ENCODE measurements at regions of chr1 and their contacts with region 1.

Region 1: GRCh38 chr1:156910309-156910782 is 10.1 kb upstream of the LRRC71 start:
- DNase-seq: peak; percentile 23 to 72 (median 48)
- ATAC-seq: peak; percentile 70
- H3K4me3 ChIP-seq: no peak overlapping the region
- H3K4me3 Mint-ChIP-seq: peak overlapping the region in 1 of 10 donors; percentile 36
- H3K27ac ChIP-seq: no peak overlapping the region
- H3K27ac Mint-ChIP-seq: peak overlapping the region in 1 of 9 donors; percentile 48
- H3K4me1 ChIP-seq: no peaks in the 10 kb centered on the region
- H3K4me1 Mint-ChIP-seq: peaks cover 0 to 1% (median 0%) of the 10 kb centered on the region in 7 donors
- H3K27me3 ChIP-seq: no peaks in the 10 kb centered on the region
- H3K27me3 Mint-ChIP-seq: peaks cover 5 to 18% (median 11%) of the 10 kb centered on the region in 5 donors

Region 2: GRCh38 chr1:156641761-156642264 is 268.5 kb before region 1 on chr1 and contains the start of gene BCAN:
- CTCF ChIA-PET with region 1: no interaction called
- POLR2A ChIA-PET with region 1: no interaction called
- intact Hi-C with region 1: no loop called
- DNase-seq: no peak
- ATAC-seq: peak; percentile 31
- H3K4me3 ChIP-seq: no peak within 1 kb of the TSS
- H3K4me3 Mint-ChIP-seq: peak within 1 kb of the TSS; percentile 63 to 82 (median 74)
- H3K27ac ChIP-seq: no peak within 1 kb of the TSS
- H3K27ac Mint-ChIP-seq: no peak within 1 kb of the TSS
- H3K4me1 ChIP-seq: peaks cover 0 to 26% of the 10 kb centered on the region in 2 donors
- H3K4me1 Mint-ChIP-seq: peaks cover 24 to 40% (median 29%) of the 10 kb centered on the region in 7 donors
- H3K27me3 ChIP-seq: peaks cover 18 to 22% of the 10 kb centered on the region in 2 donors
- H3K27me3 Mint-ChIP-seq: peaks cover 78 to 89% (median 80%) of the 10 kb centered on the region in 5 donors
- total RNA-seq, gene BCAN: not detected

Region 3: GRCh38 chr1:156927215-156928042 is 17.1 kb after region 1 on chr1:
- CTCF ChIA-PET with region 1: interaction called, 3 read pairs
- POLR2A ChIA-PET with region 1: no interaction called
- intact Hi-C with region 1: loop called in 1 of 2 experiments (anchors 2 kb)
- DNase-seq: peak; percentile 42 to 72 (median 59)
- ATAC-seq: peak; percentile 76
- H3K4me3 ChIP-seq: no peak overlapping the region
- H3K4me3 Mint-ChIP-seq: peak overlapping the region; percentile 13 to 83 (median 65)
- H3K27ac ChIP-seq: no peak overlapping the region
- H3K27ac Mint-ChIP-seq: peak overlapping the region in 2 of 9 donors; percentile 29 to 59
- H3K4me1 ChIP-seq: peaks cover 0 to 8% of the 10 kb centered on the region in 2 donors
- H3K4me1 Mint-ChIP-seq: peaks cover 18 to 35% (median 31%) of the 10 kb centered on the region in 7 donors
- H3K27me3 ChIP-seq: peaks cover 16 to 27% of the 10 kb centered on the region in 2 donors
- H3K27me3 Mint-ChIP-seq: peaks cover 72 to 91% (median 81%) of the 10 kb centered on the region in 5 donors

Region 4: DNA sequence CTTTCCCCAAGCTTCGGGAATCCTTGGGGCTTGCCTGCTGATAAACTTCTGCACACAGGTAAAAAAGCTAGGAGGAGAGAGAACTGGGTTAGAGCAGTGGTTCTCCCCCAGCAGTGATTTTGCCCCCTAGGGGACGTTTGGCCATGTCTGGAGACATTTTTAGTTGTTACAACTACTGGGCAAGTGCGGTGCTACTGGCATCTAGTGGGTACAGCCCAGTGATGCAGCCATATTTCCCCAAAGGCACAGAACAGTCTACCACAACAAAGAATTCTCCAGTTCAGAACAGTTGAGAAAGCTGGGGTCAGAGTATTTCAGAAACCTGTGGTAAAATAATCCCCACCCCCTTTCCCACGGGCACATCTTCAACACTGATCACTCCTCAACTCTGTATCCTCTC is 51.4 kb after region 1 on chr1:
- CTCF ChIA-PET with region 1: interaction called, 5 read pairs
- POLR2A ChIA-PET with region 1: no interaction called
- intact Hi-C with region 1: loop called in 1 of 2 experiments (anchors 1 kb)
- DNase-seq: peak in 7 of 9 donors; percentile 34 to 63 (median 49)
- ATAC-seq: peak; percentile 76
- H3K4me3 ChIP-seq: peak overlapping the region; percentile 5
- H3K4me3 Mint-ChIP-seq: peak overlapping the region; percentile 63 to 94 (median 76)
- H3K27ac ChIP-seq: no peak overlapping the region
- H3K27ac Mint-ChIP-seq: peak overlapping the region in 8 of 9 donors; percentile 5 to 77 (median 58)
- H3K4me1 ChIP-seq: peaks cover 13 to 29% of the 10 kb centered on the region in 2 donors
- H3K4me1 Mint-ChIP-seq: peaks cover 34 to 77% (median 59%) of the 10 kb centered on the region in 7 donors
- H3K27me3 ChIP-seq: no peaks in the 10 kb centered on the region
- H3K27me3 Mint-ChIP-seq: peaks cover 0 to 16% (median 0%) of the 10 kb centered on the region in 5 donors

Region 5: DNA sequence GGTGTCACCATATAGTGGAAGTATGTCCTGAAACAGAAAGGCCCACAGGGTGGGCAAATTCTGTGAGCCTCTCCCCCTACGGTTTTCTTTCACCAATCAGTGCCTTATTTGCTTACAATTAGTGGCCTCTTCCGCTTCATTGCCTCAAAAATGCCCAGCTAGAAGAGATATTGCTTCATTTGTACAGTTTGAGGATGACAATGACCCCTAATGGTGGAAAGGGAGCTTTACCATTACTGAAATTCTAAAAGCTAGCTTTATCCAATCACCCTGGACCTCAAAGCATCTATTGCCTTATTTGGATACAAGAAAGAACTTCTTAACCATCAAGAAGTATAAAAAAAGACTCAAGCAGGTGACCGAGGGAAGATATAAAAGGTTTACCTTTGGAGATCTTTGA is 59.7 kb after region 1 on chr1:
- CTCF ChIA-PET with region 1: interaction called, 21 read pairs
- POLR2A ChIA-PET with region 1: no interaction called
- intact Hi-C with region 1: loop called in 1 of 2 experiments (anchors 1 kb)
- DNase-seq: peak in 5 of 9 donors; percentile 14 to 27 (median 22)
- ATAC-seq: no peak
- H3K4me3 ChIP-seq: no peak overlapping the region
- H3K4me3 Mint-ChIP-seq: no peak overlapping the region
- H3K27ac ChIP-seq: no peak overlapping the region
- H3K27ac Mint-ChIP-seq: peak overlapping the region in 1 of 9 donors; percentile 12
- H3K4me1 ChIP-seq: no peaks in the 10 kb centered on the region
- H3K4me1 Mint-ChIP-seq: peaks cover 0 to 8% (median 0%) of the 10 kb centered on the region in 7 donors
- H3K27me3 ChIP-seq: no peaks in the 10 kb centered on the region
- H3K27me3 Mint-ChIP-seq: peaks cover 0 to 75% (median 4%) of the 10 kb centered on the region in 5 donors

Region 6: DNA sequence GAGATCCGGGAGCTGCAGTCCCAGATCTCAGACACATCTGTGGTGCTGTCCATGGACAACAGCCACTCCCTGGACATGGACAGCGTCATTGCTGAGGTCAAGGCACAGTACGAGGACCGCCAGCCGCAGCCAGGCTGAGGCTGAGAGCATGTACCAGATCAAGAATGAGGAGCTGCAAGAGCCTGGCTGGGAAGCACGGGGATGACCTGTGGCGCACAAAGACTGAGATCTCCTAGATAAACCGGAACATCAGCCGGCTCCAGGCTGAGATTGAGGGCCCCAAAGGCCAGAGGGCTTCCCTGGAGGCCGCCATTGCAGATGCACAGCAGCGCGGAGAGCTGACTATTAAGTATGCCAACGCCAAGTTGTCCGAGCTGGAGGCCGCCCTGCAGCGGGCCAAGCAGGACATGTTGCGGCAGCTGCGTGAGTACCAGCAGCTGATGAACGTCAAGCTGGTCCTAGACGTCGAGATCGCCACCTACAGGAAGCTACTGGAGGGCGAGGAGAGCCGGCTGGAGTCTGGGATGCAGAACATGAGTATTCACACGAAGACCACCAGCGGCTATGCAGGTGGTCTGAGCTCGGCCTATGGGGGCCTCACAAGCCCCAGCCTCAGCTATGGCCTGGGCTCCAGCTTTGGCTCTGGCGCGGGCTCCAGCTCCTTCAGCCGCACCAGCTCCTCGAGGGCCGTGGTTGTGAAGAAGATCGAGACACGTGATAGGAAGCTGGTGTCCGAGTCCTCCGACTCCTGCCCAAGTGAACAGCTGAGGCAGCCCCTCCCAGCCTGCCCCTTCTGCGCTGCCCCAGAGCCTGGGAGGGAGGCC is 163.8 kb after region 1 on chr1:
- CTCF ChIA-PET with region 1: interaction called, 8 read pairs
- POLR2A ChIA-PET with region 1: no interaction called
- intact Hi-C with region 1: loop called in 1 of 2 experiments (anchors 2 kb)
- DNase-seq: peak in 5 of 9 donors; percentile 7 to 22 (median 18)
- ATAC-seq: no peak
- H3K4me3 ChIP-seq: no peak overlapping the region
- H3K4me3 Mint-ChIP-seq: peak overlapping the region in 3 of 10 donors; percentile 9 to 20 (median 19)
- H3K27ac ChIP-seq: no peak overlapping the region
- H3K27ac Mint-ChIP-seq: no peak overlapping the region
- H3K4me1 ChIP-seq: no peaks in the 10 kb centered on the region
- H3K4me1 Mint-ChIP-seq: peaks cover 0 to 11% (median 5%) of the 10 kb centered on the region in 7 donors
- H3K27me3 ChIP-seq: peaks cover 0 to 3% of the 10 kb centered on the region in 2 donors
- H3K27me3 Mint-ChIP-seq: peaks cover 20 to 44% (median 23%) of the 10 kb centered on the region in 5 donors

Region 7: DNA sequence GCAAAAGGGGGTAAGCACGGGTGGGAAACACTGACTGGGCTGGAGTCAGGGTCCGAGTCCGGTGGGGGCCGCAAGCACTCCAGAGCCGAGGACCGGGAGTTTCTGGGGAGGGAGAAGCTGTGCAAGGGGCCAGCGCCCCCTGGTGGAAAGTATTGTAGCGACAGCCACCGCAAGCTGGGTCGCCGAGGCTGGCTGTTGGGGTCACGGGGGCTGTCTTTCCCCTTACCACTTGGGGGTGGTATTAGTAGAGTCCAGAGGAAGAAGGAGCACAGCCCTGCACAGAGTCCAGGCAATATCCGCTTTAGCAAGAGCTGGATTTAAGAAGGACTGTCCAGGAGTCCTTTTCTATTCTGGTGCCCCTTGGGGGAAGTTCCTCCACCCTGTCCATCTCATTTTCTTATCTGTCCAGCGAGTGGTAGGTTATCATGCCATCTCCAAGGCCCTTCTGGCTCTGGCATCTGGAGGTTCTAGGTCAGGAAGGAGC is 245.8 kb after region 1 on chr1:
- CTCF ChIA-PET with region 1: interaction called, 8 read pairs
- POLR2A ChIA-PET with region 1: no interaction called
- intact Hi-C with region 1: loop called in 1 of 2 experiments (anchors 2 kb)
- DNase-seq: peak; percentile 52 to 81 (median 67)
- ATAC-seq: peak; percentile 84
- H3K4me3 ChIP-seq: no peak overlapping the region
- H3K4me3 Mint-ChIP-seq: peak overlapping the region in 8 of 10 donors; percentile 52 to 73 (median 65)
- H3K27ac ChIP-seq: no peak overlapping the region
- H3K27ac Mint-ChIP-seq: peak overlapping the region in 2 of 9 donors; percentile 26 to 51
- H3K4me1 ChIP-seq: peaks cover 8 to 28% of the 10 kb centered on the region in 2 donors
- H3K4me1 Mint-ChIP-seq: peaks cover 15 to 36% (median 26%) of the 10 kb centered on the region in 7 donors
- H3K27me3 ChIP-seq: no peaks in the 10 kb centered on the region
- H3K27me3 Mint-ChIP-seq: peaks cover 6 to 22% (median 9%) of the 10 kb centered on the region in 5 donors